ENCODE measurements at regions of chr1 and their contacts with region 1.

Region 1: DNA sequence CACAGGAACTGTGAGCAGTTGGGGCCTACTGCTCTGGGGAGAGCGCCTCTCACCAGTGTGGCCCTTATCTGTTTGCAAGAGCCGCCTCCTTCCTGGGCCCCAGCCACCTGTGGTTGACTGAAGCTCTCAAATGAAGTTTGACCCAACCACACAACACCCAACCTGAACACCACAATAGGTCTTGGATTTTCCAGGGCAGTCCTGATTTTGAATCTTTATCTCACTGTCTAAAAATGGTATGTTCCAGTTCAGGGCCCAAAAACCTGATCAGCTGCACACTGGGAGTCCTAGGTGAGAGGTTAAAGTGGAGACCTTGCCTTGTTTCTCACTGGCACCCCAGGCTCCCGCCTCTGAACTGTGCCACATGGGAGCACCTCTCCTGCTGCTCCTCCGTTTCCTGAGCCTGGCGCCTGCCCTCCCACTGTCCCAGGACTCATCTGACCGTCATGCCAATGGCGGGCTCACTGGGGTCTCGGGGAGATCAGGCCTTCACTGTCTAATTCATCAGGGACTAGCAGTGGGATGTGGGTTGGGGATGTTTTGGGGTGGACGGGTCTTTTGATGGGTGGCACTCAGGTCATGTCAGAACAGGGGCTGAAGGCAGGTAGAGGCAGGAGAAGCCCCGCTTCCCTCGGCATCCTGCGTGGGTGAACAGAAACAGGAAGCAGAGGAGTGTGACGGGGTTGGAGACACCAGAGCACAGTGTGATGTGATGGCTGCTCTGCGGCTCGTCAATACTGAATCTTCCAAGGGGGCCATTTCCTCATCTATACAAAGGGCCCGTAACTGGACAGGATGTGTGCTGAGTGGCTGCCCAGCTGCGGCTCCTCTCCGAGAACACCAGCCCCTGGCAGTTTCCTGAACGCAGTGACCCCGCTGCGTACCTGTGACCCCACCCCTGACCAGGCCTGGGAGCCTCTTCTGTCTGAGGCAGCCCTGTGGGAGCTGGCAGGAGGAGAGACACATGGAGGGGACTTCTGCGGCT is 59.6 kb upstream of the ITPKB start:
- DNase-seq: no peak
- H3K4me3 ChIP-seq: no peak overlapping the region
- H3K4me3 Mint-ChIP-seq: no peak overlapping the region
- H3K27ac Mint-ChIP-seq: no peak overlapping the region
- H3K4me1 ChIP-seq: no peaks in the 10 kb centered on the region
- H3K4me1 Mint-ChIP-seq: no peaks in the 10 kb centered on the region
- H3K27me3 ChIP-seq: no peaks in the 10 kb centered on the region
- H3K27me3 Mint-ChIP-seq: peaks cover 4% of the 10 kb centered on the region
- CTCF ChIP-seq: no peak

Region 2: DNA sequence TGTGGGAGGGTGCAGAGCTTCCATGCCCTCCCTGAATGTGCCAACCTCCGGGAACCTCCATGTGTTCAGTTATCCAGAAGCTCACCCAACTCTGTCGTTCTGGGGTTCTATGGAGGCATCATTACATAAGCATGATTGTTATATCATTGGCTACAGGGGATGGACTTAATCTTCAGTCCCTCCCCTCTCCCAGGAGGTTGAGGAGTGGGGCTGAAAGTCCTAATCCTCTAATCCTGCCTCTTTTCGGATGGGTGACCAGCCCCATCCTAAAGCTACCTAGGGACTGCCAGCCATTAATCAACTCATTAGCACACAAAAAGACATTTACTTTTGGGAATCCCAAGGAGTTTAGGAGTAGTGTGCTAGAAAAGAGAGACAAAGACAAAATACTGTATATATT is 39.7 kb after region 1 on chr1:
- CTCF ChIA-PET with region 1: no interaction called
- POLR2A ChIA-PET with region 1: interaction called, 17 read pairs
- intact Hi-C with region 1: no loop called
- DNase-seq: no peak
- H3K4me3 ChIP-seq: no peak overlapping the region
- H3K4me3 Mint-ChIP-seq: no peak overlapping the region
- H3K27ac Mint-ChIP-seq: no peak overlapping the region
- H3K4me1 ChIP-seq: no peaks in the 10 kb centered on the region
- H3K4me1 Mint-ChIP-seq: no peaks in the 10 kb centered on the region
- H3K27me3 ChIP-seq: no peaks in the 10 kb centered on the region
- H3K27me3 Mint-ChIP-seq: no peaks in the 10 kb centered on the region
- CTCF ChIP-seq: no peak